ENCODE measurements at regions of chr6 and their contacts with region 1.

Region 1: DNA sequence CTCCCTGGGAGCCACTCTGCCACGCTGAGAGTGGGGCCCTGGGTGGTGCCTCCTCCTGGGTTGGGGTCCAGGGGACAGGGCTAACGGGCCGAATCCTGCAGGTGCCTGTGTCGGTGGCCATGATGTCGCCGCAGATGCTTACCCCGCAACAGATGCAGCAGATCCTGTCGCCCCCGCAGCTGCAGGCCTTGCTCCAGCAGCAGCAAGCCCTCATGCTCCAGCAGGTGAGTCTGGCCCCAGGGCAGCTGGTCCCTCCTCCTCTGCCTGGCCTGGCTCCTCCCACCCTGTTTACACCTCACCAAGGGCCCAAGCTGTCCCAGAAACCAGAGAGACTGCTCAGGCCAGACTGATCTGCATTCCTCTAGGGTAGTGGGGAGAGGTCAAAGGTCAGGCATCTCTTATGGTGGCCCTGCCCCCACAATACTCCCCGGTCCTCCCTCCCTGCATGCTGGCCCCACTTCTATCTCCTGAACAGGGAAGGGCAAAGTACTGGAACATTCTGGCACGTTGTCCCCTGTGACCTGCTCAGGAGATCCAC is 38.6 kb downstream of the FOXP4 start:
- DNase-seq: no peak
- ATAC-seq: peak; percentile 29

Region 2: DNA sequence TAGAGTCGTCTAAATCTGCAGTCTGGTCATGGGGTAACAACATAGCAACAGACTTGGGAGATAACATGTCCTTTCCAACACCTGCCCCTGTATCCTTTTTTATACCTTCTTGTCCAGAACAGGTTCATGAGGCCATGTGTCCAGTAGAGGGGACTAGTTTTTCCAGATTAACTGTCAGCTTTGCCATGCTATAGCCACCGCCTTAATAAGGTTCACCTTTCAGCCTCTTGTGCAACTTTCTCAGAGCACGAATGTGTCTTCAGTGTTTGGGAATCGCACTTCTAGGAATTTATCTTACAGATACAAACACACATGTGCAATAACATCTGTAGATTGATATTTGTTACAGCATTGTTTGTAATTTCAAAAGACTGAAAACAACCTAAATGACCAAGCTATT is 227.9 kb before region 1 on chr6:
- intact Hi-C with region 1: no loop called
- DNase-seq: no peak
- ATAC-seq: no peak

Region 3: GRCh38 chr6:41424370-41425058 is 160.2 kb before region 1 on chr6:
- intact Hi-C with region 1: loop called (anchors 5 kb)
- DNase-seq: peak; percentile 93
- ATAC-seq: peak; percentile 25

Region 4: GRCh38 chr6:41463062-41463930 is 121.4 kb before region 1 on chr6:
- intact Hi-C with region 1: loop called (anchors 5 kb)
- DNase-seq: peak; percentile 83
- ATAC-seq: peak; percentile 91

Region 5: DNA sequence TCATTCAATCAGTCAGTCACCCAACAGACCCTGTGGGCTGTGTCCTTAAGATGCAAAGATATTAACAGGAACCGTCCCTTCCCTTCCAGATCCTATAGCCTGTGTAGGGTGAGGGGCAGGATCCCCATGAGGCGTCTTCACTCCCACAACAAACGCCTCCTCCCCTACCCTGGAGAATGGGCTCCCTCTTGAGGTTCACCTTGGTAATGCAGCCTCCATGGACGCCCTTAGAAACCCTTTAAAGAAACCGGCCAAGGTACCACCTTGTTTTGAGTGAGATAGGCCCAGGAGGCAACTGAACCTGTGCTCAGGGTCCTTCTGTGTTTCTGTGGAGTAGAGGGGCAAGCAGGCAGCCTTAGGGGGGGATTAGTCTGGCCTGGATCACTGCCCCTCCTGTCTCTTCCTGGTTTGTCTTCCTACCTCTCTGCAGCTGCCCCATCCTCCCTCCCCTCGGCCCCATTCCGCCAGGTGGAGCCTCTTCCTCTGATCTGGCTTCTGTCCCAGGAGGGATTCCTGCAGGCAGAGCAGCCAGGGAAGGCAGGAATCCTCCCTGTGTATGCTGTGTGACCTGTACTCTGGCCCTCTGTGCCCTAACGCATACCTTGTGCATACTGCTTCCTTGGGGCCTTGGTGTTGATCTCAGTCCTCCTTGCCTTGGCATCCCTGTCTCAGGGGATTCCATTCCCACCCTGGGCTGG is 581.9 kb after region 1 on chr6:
- intact Hi-C with region 1: no loop called
- DNase-seq: peak; percentile 83
- ATAC-seq: peak; percentile 78